ENCODE measurements at regions of chr1 and their contacts with region 1.

Region 1: DNA sequence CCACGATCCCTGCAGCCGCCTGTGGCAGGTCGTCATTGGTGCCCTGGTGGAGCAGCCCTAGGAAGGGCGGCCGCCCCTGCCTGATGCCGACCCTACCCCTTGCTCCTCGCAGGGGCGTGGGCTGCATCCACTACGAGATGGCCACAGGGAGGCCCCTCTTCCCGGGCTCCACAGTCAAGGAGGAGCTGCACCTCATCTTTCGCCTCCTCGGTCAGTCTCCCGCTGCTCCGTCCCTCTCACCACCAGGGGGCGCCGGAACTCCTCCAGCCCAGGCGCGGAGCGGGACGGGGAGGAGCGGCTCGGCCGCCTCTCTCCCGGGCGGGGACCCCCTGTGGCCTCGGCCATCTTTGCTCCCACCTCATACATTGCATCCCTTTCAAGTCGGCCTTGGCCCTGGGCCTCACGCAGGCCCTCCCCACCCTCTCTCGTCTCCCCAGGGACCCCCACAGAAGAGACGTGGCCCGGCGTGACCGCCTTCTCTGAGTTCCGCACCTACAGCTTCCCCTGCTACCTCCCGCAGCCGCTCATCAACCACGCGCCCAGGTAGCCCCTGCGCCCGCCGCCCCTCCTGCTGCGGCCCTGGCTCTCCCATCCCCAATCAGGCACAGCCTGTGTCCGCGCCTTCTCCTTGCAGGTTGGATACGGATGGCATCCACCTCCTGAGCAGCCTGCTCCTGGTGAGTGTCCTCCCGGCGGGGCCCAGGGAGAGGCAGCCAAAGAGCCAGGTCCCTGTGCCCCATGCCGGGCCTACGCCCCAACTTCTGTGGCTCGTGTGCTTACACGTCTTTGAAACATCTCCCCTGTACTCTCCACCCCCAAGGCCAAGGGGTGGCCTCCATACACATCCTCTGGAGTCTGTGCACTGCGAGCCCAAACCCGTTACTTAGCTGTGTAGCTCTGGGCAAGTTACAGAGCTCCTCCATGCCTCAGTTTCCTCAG is 24.7 kb downstream of the CDK18 start:
- H3K4me3 Mint-ChIP-seq: peak overlapping the region; percentile 35
- H3K27ac Mint-ChIP-seq: peak overlapping the region; percentile 24
- H3K4me1 Mint-ChIP-seq: peaks cover 11% of the 10 kb centered on the region
- H3K27me3 Mint-ChIP-seq: peaks cover 13% of the 10 kb centered on the region

Region 2: DNA sequence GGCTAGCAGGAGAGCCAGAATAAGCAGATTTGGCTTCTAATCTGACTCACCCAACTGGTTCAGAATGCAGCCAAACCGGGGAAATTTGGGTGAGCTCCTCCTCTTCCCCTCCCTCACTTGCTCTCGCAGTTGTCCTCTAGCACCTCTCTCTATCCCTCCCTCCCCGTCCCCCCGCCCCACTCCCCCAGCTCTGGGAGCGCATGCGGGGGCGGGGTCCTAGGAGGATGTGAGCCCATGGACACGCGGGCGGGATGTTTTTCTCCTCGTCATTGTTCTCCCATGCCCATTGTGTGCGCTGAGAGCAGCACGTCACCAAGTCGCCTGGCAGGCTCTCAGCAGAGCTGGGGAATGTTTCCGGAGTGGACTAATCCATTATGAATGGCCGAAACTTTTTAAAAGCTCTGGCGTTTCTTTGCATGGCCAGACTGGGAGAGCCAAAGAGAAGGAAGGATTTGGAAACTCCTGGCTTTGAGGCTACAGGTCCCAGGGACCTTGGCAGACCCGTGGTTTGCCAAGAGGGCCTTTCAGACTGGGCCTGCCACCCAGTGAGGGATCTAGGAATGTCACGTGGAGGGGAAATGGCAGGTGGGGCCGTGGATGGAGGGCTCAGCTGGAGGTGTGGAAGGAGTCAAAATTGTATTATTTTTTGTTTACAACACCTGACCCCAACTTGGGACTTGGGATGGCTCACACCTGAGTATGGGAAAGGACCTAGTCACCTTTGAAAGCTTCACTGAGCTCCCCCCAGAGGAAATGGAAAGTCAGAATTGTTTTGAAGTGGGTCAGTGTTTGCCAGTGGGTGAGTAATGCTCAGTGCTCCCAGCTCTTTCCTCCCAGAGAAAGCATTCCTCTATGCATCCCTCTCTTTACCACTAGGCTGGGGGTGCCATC is 14.5 kb after region 1 on chr1:
- intact Hi-C with region 1: no loop called
- H3K4me3 Mint-ChIP-seq: peak overlapping the region; percentile 60
- H3K27ac Mint-ChIP-seq: peak overlapping the region; percentile 60
- H3K4me1 Mint-ChIP-seq: peaks cover 36% of the 10 kb centered on the region
- H3K27me3 Mint-ChIP-seq: peaks cover 54% of the 10 kb centered on the region

Region 3: GRCh38 chr1:205563867-205564441 is 34.8 kb after region 1 on chr1:
- intact Hi-C with region 1: no loop called
- H3K4me3 Mint-ChIP-seq: no peak overlapping the region
- H3K27ac Mint-ChIP-seq: no peak overlapping the region
- H3K4me1 Mint-ChIP-seq: peaks cover 18% of the 10 kb centered on the region
- H3K27me3 Mint-ChIP-seq: peaks cover 64% of the 10 kb centered on the region

Region 4: GRCh38 chr1:205631727-205632373 is 102.7 kb after region 1 on chr1 and contains the start of gene ELK4:
- intact Hi-C with region 1: loop called (anchors 1 kb)
- H3K4me3 Mint-ChIP-seq: peak within 1 kb of the TSS; percentile 100
- H3K27ac Mint-ChIP-seq: peak within 1 kb of the TSS; percentile 95
- H3K4me1 Mint-ChIP-seq: peaks cover 16% of the 10 kb centered on the region
- H3K27me3 Mint-ChIP-seq: no peaks in the 10 kb centered on the region